CD4-positive, alpha-beta memory T cell (primary cell): ENCODE measurements at regions of chr7 and their contacts with region 1.

Region 1: GRCh38 chr7:111561885-111562732 is at the start of gene IMMP2L:
- DNase-seq: peak; percentile 82 to 95 (median 91)
- H3K4me3 ChIP-seq: peak within 1 kb of the TSS; percentile 73 to 74
- H3K4me3 Mint-ChIP-seq: peak within 1 kb of the TSS; percentile 90 to 94 (median 92)
- H3K27ac ChIP-seq: peak within 1 kb of the TSS; percentile 76
- H3K27ac Mint-ChIP-seq: peak within 1 kb of the TSS; percentile 88 to 98 (median 95)
- H3K4me1 ChIP-seq: peaks cover 32% of the 10 kb centered on the region
- H3K4me1 Mint-ChIP-seq: peaks cover 27 to 47% (median 36%) of the 10 kb centered on the region in 4 donors
- H3K27me3 ChIP-seq: no peaks in the 10 kb centered on the region
- H3K27me3 Mint-ChIP-seq: peaks cover 3 to 5% of the 10 kb centered on the region in 2 donors
- total RNA-seq, gene IMMP2L: 29.2 to 32.2 TPM

Region 2: GRCh38 chr7:111089822-111090426 is 472.2 kb before region 1 on chr7:
- CTCF ChIA-PET with region 1: no interaction called
- POLR2A ChIA-PET with region 1: interaction called, 3 read pairs
- intact Hi-C with region 1: loop called (anchors 5 kb)
- DNase-seq: peak in 4 of 5 donors; percentile 22 to 42 (median 32)
- H3K4me3 ChIP-seq: no peak overlapping the region
- H3K4me3 Mint-ChIP-seq: peak overlapping the region in 1 of 8 donors; percentile 22
- H3K27ac ChIP-seq: no peak overlapping the region
- H3K27ac Mint-ChIP-seq: no peak overlapping the region
- H3K4me1 ChIP-seq: peaks cover 7% of the 10 kb centered on the region
- H3K4me1 Mint-ChIP-seq: peaks cover 5 to 17% (median 9%) of the 10 kb centered on the region in 4 donors
- H3K27me3 ChIP-seq: no peaks in the 10 kb centered on the region
- H3K27me3 Mint-ChIP-seq: no peaks in the 10 kb centered on the region

Region 3: GRCh38 chr7:112939574-112940314 is 1377.6 kb after region 1 on chr7:
- CTCF ChIA-PET with region 1: no interaction called
- POLR2A ChIA-PET with region 1: interaction called, 4 read pairs
- intact Hi-C with region 1: loop called (anchors 10 kb)
- DNase-seq: peak; percentile 99 to 100 (median 99)
- H3K4me3 ChIP-seq: peak overlapping the region; percentile 71 to 72
- H3K4me3 Mint-ChIP-seq: peak overlapping the region; percentile 92 to 99 (median 96)
- H3K27ac ChIP-seq: peak overlapping the region; percentile 71
- H3K27ac Mint-ChIP-seq: peak overlapping the region; percentile 90 to 99 (median 97)
- H3K4me1 ChIP-seq: peaks cover 40% of the 10 kb centered on the region
- H3K4me1 Mint-ChIP-seq: peaks cover 31 to 59% (median 43%) of the 10 kb centered on the region in 4 donors
- H3K27me3 ChIP-seq: no peaks in the 10 kb centered on the region
- H3K27me3 Mint-ChIP-seq: peaks cover 0 to 4% of the 10 kb centered on the region in 2 donors

Region 4: DNA sequence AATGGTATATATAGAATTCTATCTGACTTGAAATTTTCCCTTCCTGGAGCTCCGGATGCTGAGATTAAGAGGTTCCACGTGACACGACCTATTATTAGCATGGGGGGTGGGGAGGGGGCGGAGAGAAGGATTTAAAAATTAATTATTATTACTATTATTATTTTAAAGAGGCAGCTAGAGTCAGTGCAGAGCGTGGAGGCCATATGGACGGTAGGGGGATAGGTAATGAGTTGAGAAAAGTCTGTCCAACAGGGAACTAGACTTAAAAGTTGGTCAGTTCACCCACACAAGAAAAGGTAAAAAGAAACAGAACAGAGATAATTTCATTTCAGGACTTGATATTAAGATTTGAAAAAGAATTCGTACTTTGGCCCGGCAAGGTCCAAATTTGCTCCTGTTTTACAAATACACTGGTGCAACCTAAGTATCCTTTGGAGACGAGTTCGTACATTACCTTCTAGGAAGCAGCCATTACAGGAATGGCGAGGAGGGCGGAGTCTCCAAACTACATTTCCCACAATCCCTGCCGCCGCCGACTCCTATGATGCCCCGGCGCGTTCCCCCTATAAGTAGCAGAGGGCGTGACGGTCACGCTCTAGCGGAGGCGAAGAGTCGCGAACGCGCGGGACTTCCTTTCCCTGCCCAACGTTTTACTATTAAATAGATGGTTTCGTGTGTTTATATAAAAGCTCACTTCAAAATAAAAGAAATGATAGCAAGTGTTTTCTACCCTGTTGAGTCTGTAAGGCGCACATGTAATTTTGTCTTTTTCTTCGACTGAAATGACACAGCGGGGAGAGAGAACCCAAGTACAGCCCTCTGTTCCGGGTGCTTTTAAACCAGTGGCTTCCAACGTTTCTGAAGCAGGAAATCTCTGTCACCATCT is 1556.2 kb after region 1 on chr7 and contains the start of gene SMIM30:
- CTCF ChIA-PET with region 1: no interaction called
- POLR2A ChIA-PET with region 1: no interaction called
- intact Hi-C with region 1: loop called (anchors 1 kb)
- DNase-seq: peak; percentile 85 to 89 (median 87)
- H3K4me3 ChIP-seq: peak within 1 kb of the TSS; percentile 65 to 70
- H3K4me3 Mint-ChIP-seq: peak within 1 kb of the TSS; percentile 94 to 99 (median 96)
- H3K27ac ChIP-seq: peak within 1 kb of the TSS; percentile 70
- H3K27ac Mint-ChIP-seq: peak within 1 kb of the TSS; percentile 84 to 99 (median 98)
- H3K4me1 ChIP-seq: peaks cover 13% of the 10 kb centered on the region
- H3K4me1 Mint-ChIP-seq: peaks cover 11 to 24% (median 14%) of the 10 kb centered on the region in 4 donors
- H3K27me3 ChIP-seq: no peaks in the 10 kb centered on the region
- H3K27me3 Mint-ChIP-seq: no peaks in the 10 kb centered on the region
- total RNA-seq, gene SMIM30: 21.6 to 21.8 TPM